Dorsolateral prefrontal cortex (tissue), 120 donors: ENCODE measurements at regions of chr1 and their contacts with region 1.

Region 1: DNA sequence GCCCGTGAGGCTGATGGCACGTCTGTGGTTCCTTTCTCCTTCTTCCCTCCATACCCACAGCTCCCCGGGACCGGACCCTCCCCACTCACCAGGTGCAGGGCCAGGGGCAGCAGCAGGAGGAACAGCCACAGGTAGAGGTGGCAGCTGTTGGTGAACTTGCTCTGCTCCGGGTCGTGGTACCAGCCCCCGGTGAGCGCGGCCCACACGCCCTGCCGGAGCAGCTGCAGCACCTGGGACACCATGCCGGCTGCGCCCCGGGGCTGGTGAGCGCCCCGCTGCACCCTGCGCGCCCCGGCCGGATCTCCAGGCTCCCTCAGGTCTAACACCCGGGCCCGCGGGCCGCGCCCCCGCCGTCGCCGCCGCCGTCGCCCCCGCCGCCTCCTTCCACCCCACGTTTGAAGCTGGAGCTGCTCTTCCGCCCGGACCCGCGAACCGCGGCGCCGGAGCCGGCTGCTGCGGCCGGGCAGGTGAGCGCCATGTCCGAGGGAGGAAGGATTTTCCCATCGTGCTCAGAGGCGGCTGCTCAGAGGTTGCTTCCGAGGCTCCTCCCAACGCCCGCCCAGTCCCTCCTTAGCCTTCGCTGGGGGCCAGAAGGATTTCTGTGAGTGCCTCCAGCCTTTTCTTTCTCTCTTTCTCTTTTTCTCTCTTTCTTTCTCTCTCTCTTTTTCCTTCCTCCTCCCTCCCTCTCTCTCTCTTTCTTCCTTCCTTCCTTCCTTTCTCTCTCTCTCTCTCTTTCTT is at the start of gene PCNX2:
- DNase-seq: peak in 9 of 10 donors; percentile 37 to 87 (median 75)
- H3K4me3 ChIP-seq: peak within 1 kb of the TSS; percentile 41 to 91 (median 77)
- H3K27ac ChIP-seq: peak within 1 kb of the TSS in 44 of 59 donors; percentile 5 to 83 (median 66)
- H3K27me3 ChIP-seq: no peaks in the 10 kb centered on the region
- CTCF ChIP-seq: no peak
- total RNA-seq, gene PCNX2: 85.7 to 219 (median 153) TPM

Region 2: GRCh38 chr1:233140974-233141373 is 154.4 kb before region 1 on chr1:
- intact Hi-C with region 1: no loop called
- DNase-seq: no peak
- H3K4me3 ChIP-seq: no peak overlapping the region
- H3K27ac ChIP-seq: no peak overlapping the region
- H3K27me3 ChIP-seq: no peaks in the 10 kb centered on the region
- CTCF ChIP-seq: no peak

Region 3: DNA sequence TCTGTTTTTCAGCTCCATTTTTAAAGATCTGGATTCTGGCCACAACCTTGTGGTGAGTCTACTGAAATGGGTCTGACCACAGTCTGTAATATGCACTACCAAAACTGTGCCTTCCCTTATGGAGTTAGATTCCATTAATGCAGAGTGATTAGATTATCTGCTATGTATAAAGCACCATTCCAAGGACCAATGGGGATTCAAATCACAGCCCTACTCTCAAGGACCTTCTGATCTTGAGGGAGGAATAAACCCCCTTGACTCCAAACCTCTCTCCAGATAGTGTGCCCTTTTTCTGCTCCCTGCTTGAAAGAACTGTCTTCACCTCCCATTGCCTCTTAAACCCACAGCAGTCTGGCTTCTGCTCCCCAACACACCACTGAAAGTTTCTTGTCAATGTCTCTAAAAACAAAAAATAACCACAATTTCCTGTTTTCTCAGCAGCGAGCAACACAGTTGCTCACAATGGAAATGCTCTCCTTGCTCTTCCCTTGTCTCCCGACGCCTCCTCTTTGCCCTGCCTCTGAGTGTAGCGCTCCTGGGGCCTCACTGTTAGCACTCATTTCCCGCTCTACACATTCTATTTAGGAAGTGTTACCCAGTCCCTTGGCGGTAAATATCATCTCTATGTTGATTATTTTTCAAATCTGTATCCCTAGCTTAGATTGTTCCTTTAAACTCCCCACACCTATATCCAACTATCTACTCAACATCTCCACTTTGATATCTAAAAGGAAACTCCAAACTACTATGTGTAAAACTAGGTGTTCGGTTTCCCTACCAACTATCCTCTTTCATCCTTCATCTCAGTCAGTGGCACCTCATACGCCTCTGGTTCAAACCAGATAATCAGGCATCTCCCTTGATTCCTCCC is 13.5 kb before region 1 on chr1:
- intact Hi-C with region 1: loop called in 1 of 2 experiments (anchors 1 kb)
- DNase-seq: no peak
- H3K4me3 ChIP-seq: no peak overlapping the region
- H3K27ac ChIP-seq: peak overlapping the region in 5 of 59 donors; percentile 5 to 36 (median 7)
- H3K27me3 ChIP-seq: no peaks in the 10 kb centered on the region
- CTCF ChIP-seq: no peak